Ascending aorta (tissue), 2 donors: ENCODE measurements at regions of chr2 and their contacts with region 1.

Region 1: GRCh38 chr2:120511947-120512710 is 166.2 kb downstream of the INHBB start:
- DNase-seq: no peak
- H3K4me3 ChIP-seq: no peak overlapping the region
- H3K27ac ChIP-seq: no peak overlapping the region
- H3K4me1 ChIP-seq: peaks cover 0 to 7% of the 10 kb centered on the region in 2 donors
- H3K27me3 ChIP-seq: no peaks in the 10 kb centered on the region
- CTCF ChIP-seq: no peak

Region 2: GRCh38 chr2:120352701-120353590 is 159.2 kb before region 1 on chr2:
- intact Hi-C with region 1: no loop called
- DNase-seq: no peak
- H3K4me3 ChIP-seq: no peak overlapping the region
- H3K27ac ChIP-seq: no peak overlapping the region
- H3K4me1 ChIP-seq: no peaks in the 10 kb centered on the region
- H3K27me3 ChIP-seq: no peaks in the 10 kb centered on the region
- CTCF ChIP-seq: no peak

Region 3: DNA sequence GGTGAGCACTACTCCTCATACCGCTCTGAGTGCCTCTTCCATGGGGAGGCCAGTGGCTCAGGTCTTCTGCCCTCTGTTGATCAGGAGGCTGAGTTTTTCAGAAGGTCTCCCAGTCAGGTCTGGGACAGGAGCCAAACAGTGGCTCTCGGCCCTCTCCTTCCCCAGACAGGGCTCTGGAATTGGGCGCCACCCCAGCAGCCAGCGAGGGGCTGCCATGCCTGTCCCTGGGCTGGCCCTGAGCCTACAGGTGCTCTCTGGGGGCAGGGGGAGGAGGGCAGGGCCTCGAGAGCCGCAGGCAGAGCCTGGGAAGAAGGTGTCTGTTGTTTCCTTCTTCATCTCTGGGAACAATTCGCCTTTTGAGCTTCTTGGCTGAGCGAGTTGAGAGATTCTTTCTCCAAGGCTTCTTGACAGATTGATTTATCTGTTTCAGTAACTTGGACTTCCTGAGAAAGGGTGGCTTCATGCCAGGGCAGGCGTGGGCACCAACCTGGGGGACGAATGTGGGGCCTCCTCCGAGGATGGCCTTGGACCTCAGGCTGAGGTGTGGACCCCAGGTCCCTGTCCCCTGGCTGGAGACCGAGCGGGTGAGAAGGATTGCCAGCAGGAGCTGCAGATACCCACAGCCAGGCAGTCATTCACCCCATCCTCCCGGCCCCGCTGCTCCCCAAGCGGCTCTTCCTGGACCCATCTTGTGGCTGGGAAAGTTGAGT is 158.8 kb after region 1 on chr2:
- intact Hi-C with region 1: loop called (anchors 5 kb)
- DNase-seq: no peak
- H3K4me3 ChIP-seq: no peak overlapping the region
- H3K27ac ChIP-seq: no peak overlapping the region
- H3K4me1 ChIP-seq: no peaks in the 10 kb centered on the region
- H3K27me3 ChIP-seq: peaks cover 6% of the 10 kb centered on the region
- CTCF ChIP-seq: no peak